Activated naive CD4-positive, alpha-beta T cell treated with anti-CD3 and anti-CD28 coated beads for 36 hours (primary cell): ENCODE measurements at regions of chr15 and their contacts with region 1.

Region 1: GRCh38 chr15:66603301-66604179 is 37.7 kb upstream of the LCTL start:
- DNase-seq: peak; percentile 72
- H3K4me3 Mint-ChIP-seq: no peak overlapping the region
- H3K27ac Mint-ChIP-seq: no peak overlapping the region
- H3K4me1 Mint-ChIP-seq: peaks cover under 1% of the 10 kb centered on the region
- H3K27me3 Mint-ChIP-seq: no peaks in the 10 kb centered on the region

Region 2: GRCh38 chr15:66619151-66619903 is 15.8 kb after region 1 on chr15:
- CTCF ChIA-PET with region 1: interaction called, 10 read pairs
- intact Hi-C with region 1: no loop called
- DNase-seq: peak; percentile 61
- H3K4me3 Mint-ChIP-seq: no peak overlapping the region
- H3K27ac Mint-ChIP-seq: no peak overlapping the region
- H3K4me1 Mint-ChIP-seq: peaks cover 4% of the 10 kb centered on the region
- H3K27me3 Mint-ChIP-seq: peaks cover 20% of the 10 kb centered on the region

Region 3: GRCh38 chr15:66774001-66774814 is 170.7 kb after region 1 on chr15:
- CTCF ChIA-PET with region 1: interaction called, 10 read pairs
- intact Hi-C with region 1: loop called (anchors 1 kb)
- DNase-seq: peak; percentile 72
- H3K4me3 Mint-ChIP-seq: no peak overlapping the region
- H3K27ac Mint-ChIP-seq: no peak overlapping the region
- H3K4me1 Mint-ChIP-seq: no peaks in the 10 kb centered on the region
- H3K27me3 Mint-ChIP-seq: no peaks in the 10 kb centered on the region

Region 4: DNA sequence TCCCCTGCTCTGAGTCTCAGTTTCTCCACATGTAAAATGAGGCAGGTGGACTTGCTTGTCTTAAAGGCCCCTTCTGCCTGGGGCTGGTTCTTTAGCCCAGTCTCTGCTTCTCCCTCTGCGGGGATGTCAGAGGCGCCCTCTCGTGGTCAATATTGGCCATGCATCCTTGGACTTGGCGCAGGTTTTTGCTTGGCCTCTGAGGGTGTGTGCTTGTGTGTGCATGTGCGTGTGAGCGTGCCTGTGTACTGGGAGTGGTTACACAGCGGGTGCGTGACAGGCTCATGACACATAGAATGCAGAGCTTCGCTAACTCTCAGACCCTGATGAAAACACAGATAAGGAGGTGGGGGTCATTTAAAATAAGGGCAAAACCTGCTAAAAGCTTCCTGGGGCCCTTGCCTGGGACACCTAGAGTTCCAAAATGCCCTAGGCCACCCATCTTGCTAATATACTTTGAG is 259.4 kb after region 1 on chr15:
- CTCF ChIA-PET with region 1: interaction called, 3 read pairs
- intact Hi-C with region 1: loop called (anchors 1 kb)
- DNase-seq: peak; percentile 85
- H3K4me3 Mint-ChIP-seq: no peak overlapping the region
- H3K27ac Mint-ChIP-seq: no peak overlapping the region
- H3K4me1 Mint-ChIP-seq: no peaks in the 10 kb centered on the region
- H3K27me3 Mint-ChIP-seq: peaks cover 12% of the 10 kb centered on the region